Adrenal gland (tissue), 19 donors: ENCODE measurements at regions of chr3 and their contacts with region 1.

Region 1: GRCh38 chr3:24237971-24238767 is 256.5 kb downstream of the THRB start:
- DNase-seq: peak; percentile 31 to 71 (median 56)
- H3K4me3 ChIP-seq: no peak overlapping the region
- H3K27ac ChIP-seq: no peak overlapping the region
- H3K4me1 ChIP-seq: peaks cover 0 to 14% of the 10 kb centered on the region in 2 donors
- H3K27me3 ChIP-seq: no peaks in the 10 kb centered on the region
- CTCF ChIP-seq: peak; percentile 51 to 90 (median 68)
- POLR2A ChIP-seq: no peak

Region 2: DNA sequence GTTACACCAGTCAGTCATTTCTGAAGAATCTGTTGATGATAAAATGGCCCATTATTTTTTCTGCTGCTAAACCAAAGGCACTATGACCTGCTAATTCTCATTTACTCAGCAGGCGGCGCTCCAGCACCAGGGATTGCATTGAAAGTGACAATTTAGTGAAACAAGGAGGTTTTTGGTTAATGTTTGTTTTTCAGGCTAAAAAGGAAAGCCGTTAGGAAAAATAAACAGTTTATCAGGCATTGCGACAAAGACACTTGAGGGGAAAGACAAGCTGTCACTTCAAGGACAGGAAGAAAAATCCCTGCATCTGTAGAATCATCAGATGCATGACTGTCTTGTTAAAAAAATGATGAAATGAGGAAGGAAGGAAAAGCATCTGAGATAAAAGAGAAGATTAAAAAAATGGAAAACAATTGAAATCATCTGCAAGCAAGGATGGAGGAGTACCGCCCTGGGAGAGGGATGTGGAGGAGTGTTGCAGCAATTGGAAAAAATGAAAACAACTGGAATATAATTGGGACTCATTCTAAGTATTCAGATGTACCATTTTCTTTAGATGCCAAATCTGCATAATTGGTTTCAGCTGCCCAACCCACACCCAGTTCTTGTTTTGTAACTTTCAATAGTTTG is 239.0 kb before region 1 on chr3:
- intact Hi-C with region 1: loop called (anchors 5 to 10 kb)
- DNase-seq: peak; percentile 53 to 93 (median 74)
- H3K4me3 ChIP-seq: no peak overlapping the region
- H3K27ac ChIP-seq: no peak overlapping the region
- H3K4me1 ChIP-seq: peaks cover 0 to 5% of the 10 kb centered on the region in 2 donors
- H3K27me3 ChIP-seq: no peaks in the 10 kb centered on the region
- CTCF ChIP-seq: peak; percentile 77 to 97 (median 95)
- POLR2A ChIP-seq: no peak

Region 3: GRCh38 chr3:24185738-24186384 is 52.3 kb before region 1 on chr3:
- intact Hi-C with region 1: loop called in 1 of 2 experiments (anchors 10 kb)
- DNase-seq: peak; percentile 18 to 56 (median 44)
- H3K4me3 ChIP-seq: no peak overlapping the region
- H3K27ac ChIP-seq: no peak overlapping the region
- H3K4me1 ChIP-seq: no peaks in the 10 kb centered on the region
- H3K27me3 ChIP-seq: no peaks in the 10 kb centered on the region
- CTCF ChIP-seq: peak; percentile 37 to 69 (median 57)
- POLR2A ChIP-seq: no peak

Region 4: DNA sequence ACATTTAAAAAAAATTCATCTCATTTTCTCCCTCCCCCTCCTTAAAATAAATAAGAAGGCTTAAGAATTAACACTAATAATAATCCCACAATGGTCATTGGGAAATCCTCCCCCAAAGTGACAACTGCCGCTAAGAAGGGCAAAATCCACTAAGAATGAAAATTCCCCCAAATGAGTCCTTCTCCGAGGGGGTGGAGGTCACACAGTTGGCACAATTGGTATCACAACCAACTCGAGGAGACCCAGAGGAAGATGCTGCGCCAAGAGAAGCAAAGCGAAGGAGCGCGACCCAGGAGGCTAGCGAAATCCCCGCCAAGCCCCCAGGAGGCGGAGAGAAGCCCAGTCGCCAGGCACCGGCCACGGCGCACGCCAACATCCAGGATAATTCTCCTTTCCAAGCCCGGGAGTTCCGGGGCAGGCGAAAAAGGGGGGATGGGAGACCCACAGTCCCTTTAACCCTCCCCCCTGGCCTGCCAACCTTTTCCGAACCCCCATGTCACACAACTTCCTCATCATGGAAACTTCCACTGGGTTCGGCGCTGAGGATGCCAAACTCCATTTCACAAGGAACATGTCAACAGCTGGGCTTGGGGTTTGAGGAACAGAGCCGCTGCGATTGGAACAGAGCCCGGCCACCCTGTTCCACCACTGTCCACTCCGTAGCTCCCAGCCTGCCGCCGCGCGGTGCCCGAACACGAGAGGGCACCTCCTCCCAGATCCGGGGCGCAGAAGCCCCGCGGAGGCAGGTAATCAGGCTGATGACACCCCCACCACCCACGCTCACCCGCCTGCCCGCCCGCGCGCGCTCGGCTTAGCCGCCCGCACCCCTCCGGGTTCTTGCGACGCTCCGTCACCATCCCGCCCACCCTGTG is 255.8 kb after region 1 on chr3:
- intact Hi-C with region 1: no loop called
- DNase-seq: peak; percentile 78 to 90 (median 85)
- H3K4me3 ChIP-seq: peak overlapping the region; percentile 28 to 87 (median 57)
- H3K27ac ChIP-seq: peak overlapping the region; percentile 90 to 98 (median 95)
- H3K4me1 ChIP-seq: peaks cover 14 to 33% of the 10 kb centered on the region in 2 donors
- H3K27me3 ChIP-seq: no peaks in the 10 kb centered on the region
- CTCF ChIP-seq: no peak
- POLR2A ChIP-seq: peak in 1 of 2 donors; percentile 29